Heart right ventricle (tissue), 16 donors: ENCODE measurements at regions of chr12 and their contacts with region 1.

Region 1: GRCh38 chr12:15341371-15341770 is 19.1 kb downstream of the PTPRO start:
- DNase-seq: no peak
- ATAC-seq: no peak
- H3K4me3 ChIP-seq: no peak overlapping the region
- H3K27ac ChIP-seq: no peak overlapping the region
- H3K4me1 ChIP-seq: no peaks in the 10 kb centered on the region
- H3K27me3 ChIP-seq: peaks cover 0 to 39% (median 5%) of the 10 kb centered on the region in 7 donors
- CTCF ChIP-seq: no peak

Region 2: DNA sequence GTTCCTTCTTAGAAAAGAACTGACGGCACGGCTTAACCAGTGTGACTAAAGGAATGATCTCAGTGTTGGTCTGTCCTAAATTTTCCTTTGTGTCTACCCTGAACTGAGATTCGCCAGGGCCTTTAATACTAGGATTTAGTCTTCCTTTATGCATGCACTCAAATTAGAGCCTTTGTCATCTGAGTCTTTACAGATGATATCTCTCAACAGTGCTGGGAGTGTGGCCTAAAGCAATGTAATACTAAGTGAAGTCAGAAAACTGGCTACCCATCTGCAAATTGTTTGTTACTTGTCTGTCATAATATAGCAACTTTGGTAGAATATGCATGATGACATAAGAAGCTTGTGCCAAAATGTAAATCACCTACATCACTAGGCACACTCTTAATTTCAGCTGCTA is 76.3 kb after region 1 on chr12:
- intact Hi-C with region 1: loop called in 1 of 10 experiments (anchors 10 kb)
- DNase-seq: no peak
- ATAC-seq: no peak
- H3K4me3 ChIP-seq: no peak overlapping the region
- H3K27ac ChIP-seq: no peak overlapping the region
- H3K4me1 ChIP-seq: no peaks in the 10 kb centered on the region
- H3K27me3 ChIP-seq: peaks cover 0 to 3% (median 0%) of the 10 kb centered on the region in 7 donors
- CTCF ChIP-seq: no peak

Region 3: GRCh38 chr12:15556411-15557102 is 215.2 kb after region 1 on chr12:
- intact Hi-C with region 1: no loop called
- DNase-seq: no peak
- ATAC-seq: no peak
- H3K4me3 ChIP-seq: no peak overlapping the region
- H3K27ac ChIP-seq: no peak overlapping the region
- H3K4me1 ChIP-seq: peaks cover 0 to 3% (median 0%) of the 10 kb centered on the region in 9 donors
- H3K27me3 ChIP-seq: no peaks in the 10 kb centered on the region
- CTCF ChIP-seq: no peak